Upper lobe of right lung (tissue), 1 donor: ENCODE measurements at regions of chr4 and their contacts with region 1.

Region 1: DNA sequence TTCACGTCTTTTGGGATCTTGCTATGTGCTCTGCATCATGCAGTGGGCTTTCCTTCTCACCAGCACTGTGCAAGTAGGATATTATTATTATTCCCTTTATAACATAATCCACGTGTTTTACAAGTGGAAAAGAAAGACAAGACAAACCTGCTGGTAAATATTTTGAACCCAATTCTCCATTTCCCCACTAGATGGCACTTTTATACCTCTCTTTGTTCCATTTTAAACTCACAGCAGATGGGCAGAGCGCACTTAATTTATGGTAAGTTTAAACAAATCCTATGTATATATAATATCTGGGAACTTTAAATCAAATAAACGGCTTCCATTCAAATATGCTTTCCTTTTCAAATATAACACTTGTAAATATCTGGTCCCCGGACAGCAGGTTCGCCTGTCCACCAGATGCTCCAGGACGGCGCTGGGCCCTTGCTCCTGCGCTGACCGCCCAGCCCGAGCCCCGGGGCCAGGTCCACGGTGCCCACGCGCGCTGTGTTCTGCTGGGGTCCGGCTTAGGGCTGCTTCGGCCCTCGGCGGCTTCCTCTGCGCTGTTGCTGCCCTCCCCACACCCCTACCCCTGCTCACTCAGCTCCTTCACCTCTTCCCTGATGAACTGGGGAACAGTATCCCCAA is 31.1 kb downstream of the F11 start:
- DNase-seq: no peak
- ATAC-seq: peak; percentile 48
- H3K4me3 ChIP-seq: no peak overlapping the region
- H3K27ac ChIP-seq: no peak overlapping the region
- H3K4me1 ChIP-seq: no peaks in the 10 kb centered on the region
- H3K27me3 ChIP-seq: peaks cover 12% of the 10 kb centered on the region
- CTCF ChIP-seq: peak; percentile 68

Region 2: GRCh38 chr4:186587416-186588018 is 290.4 kb after region 1 on chr4:
- intact Hi-C with region 1: loop called (anchors 10 kb)
- DNase-seq: peak; percentile 76
- ATAC-seq: peak; percentile 77
- H3K4me3 ChIP-seq: no peak overlapping the region
- H3K27ac ChIP-seq: no peak overlapping the region
- H3K4me1 ChIP-seq: no peaks in the 10 kb centered on the region
- H3K27me3 ChIP-seq: no peaks in the 10 kb centered on the region
- CTCF ChIP-seq: peak; percentile 94